ENCODE measurements at regions of chr12 and their contacts with region 1.

Region 1: GRCh38 chr12:32755654-32756475 is at the start of gene YARS2:
- DNase-seq: peak; percentile 87 to 90
- H3K4me3 ChIP-seq: peak within 1 kb of the TSS; percentile 77 to 100 (median 98)
- H3K27ac ChIP-seq: peak within 1 kb of the TSS; percentile 92
- H3K4me1 ChIP-seq: peaks cover 0 to 3% (median 1%) of the 10 kb centered on the region in 4 experiments; a peak in 2 of 7 replicates
- H3K27me3 ChIP-seq: no peaks in the 10 kb centered on the region; a peak in 1 of 7 replicates
- CTCF ChIP-seq: peak; percentile 35 to 89 (median 76)
- EP300 ChIP-seq: no peak
- POLR2A ChIP-seq: peak; percentile 94 to 100
- RAD21 ChIP-seq: peak; percentile 97 to 99
- total RNA-seq, gene YARS2: 41.0 and 41.4 TPM in 2 replicates

Region 2: DNA sequence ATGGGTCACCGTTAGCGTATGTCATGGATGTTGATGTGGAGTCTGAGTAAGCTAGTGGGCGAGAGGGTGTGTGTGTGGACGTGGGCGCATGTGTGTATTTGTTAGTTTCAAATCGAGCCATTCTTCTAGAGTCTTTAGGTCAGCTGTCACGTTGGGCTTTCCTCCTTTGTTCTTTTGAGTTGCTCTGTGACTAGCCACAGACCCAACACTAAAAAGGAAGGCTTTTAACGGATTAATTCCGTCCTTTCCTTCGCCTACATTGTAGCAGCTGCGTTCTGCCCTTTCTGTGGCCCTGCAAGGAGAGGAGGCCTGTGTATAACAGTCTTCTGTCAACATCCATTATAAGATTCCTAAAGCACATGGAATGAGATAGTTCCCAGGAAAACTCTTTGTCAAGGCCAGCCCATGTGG is 193.9 kb before region 1 on chr12:
- CTCF ChIA-PET with region 1: no interaction called
- POLR2A ChIA-PET with region 1: no interaction called
- DNase-seq: no peak
- H3K4me3 ChIP-seq: no peak overlapping the region
- H3K27ac ChIP-seq: no peak overlapping the region; the same call in 1 of the 2 replicates
- H3K4me1 ChIP-seq: peaks cover 3 to 16% (median 15%) of the 10 kb centered on the region in 4 experiments
- H3K27me3 ChIP-seq: no peaks in the 10 kb centered on the region
- CTCF ChIP-seq: no peak
- EP300 ChIP-seq: no peak
- POLR2A ChIP-seq: no peak
- RAD21 ChIP-seq: no peak

Region 3: DNA sequence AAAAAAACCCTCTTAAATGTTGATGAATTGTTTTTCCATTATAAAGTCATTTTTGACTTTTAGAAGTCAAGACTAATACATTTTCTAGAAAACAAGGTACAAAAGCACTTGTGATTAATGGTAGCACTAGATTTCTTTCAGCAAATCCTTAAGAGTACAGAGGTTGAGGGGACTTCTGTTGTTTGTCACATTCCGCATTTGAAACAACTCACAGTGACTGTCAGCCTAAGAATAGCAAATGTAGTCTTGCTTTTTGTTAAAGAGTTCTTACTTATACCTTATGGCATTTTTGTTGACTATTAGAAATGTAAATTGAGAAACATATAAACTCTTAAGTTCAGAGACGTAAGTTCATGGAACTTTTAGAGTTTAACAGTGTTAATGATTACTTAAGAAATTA is 16.6 kb before region 1 on chr12:
- CTCF ChIA-PET with region 1: interaction called, 10 read pairs
- POLR2A ChIA-PET with region 1: interaction called, 22 read pairs
- DNase-seq: no peak
- H3K4me3 ChIP-seq: no peak overlapping the region
- H3K27ac ChIP-seq: no peak overlapping the region
- H3K4me1 ChIP-seq: peaks cover 0 to 3% (median under 1%) of the 10 kb centered on the region in 4 experiments; a peak in 2 of 7 replicates
- H3K27me3 ChIP-seq: no peaks in the 10 kb centered on the region
- CTCF ChIP-seq: no peak
- EP300 ChIP-seq: no peak
- POLR2A ChIP-seq: no peak
- RAD21 ChIP-seq: no peak

Region 4: DNA sequence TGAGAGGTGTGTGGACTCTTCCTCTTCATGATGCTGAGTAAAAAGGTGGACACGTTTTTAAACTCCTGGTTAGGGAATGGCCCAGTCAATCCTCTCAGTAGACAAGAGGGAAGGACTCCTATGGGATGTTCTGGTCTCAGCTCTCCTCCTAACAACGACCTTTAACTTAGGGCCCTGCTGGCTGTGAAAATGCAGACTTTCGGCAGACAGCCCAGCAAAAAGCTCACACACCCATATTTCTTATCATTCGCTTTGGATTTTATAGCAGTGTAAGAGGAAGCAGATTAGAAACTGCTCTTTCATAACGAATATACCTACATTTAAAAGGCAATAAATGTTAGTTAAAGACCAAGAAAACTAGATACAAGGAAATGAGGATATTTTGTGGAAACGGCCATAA is 17.8 kb after region 1 on chr12:
- CTCF ChIA-PET with region 1: interaction called, 30 read pairs
- POLR2A ChIA-PET with region 1: interaction called, 7 read pairs
- DNase-seq: no peak
- H3K4me3 ChIP-seq: no peak overlapping the region
- H3K27ac ChIP-seq: no peak overlapping the region
- H3K4me1 ChIP-seq: no peaks in the 10 kb centered on the region
- H3K27me3 ChIP-seq: no peaks in the 10 kb centered on the region
- CTCF ChIP-seq: no peak
- EP300 ChIP-seq: no peak
- POLR2A ChIP-seq: no peak
- RAD21 ChIP-seq: no peak

Region 5: DNA sequence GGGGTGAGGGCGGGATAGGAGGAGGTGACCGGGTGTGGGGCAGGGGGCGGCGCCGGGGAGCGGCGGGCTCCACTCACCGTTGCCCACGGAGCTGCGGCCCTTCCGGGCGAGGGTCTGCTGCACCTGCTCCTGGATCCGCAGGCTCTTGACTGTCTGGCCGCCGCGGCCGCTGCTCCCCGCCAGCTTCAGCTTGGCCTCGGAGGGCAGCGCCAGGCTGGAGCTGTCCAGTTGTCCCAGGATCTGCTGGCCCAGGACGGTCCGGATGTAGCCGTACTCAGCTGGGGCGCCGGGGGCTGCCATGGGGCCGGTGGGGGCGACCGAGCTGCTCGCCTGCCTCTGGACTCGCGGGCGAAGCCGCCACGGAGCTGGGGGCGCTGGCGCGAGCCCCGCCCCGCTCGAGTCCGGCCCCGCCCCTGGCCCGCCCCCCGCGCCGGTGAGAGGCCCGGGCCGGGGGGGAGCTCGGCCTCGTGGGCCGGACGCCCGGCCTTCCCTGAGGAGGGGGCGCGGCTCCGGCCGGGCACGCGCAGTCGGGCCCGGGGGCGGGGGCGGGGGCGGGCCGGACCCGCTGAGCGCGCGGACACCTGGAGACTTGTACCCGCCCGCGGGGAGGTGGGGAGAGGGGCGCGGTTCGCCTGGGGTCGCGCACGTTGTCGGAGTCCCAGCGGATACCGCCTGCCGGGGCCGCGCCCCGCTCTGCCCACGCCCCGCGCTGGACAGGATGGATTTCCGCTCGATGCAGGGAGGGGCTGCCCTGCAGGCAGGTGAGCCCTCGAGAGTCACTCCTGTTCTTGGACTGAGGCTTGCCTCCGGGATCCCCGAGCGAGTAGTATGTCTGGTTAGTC is 140.8 kb after region 1 on chr12 and contains the start of gene PKP2:
- CTCF ChIA-PET with region 1: interaction called, 8 read pairs
- POLR2A ChIA-PET with region 1: interaction called, 15 read pairs
- DNase-seq: peak; percentile 70 to 83
- H3K4me3 ChIP-seq: peak within 1 kb of the TSS; percentile 73 to 83 (median 78)
- H3K27ac ChIP-seq: peak within 1 kb of the TSS; percentile 41; the same call in 1 of the 2 replicates
- H3K4me1 ChIP-seq: peaks cover 7 to 20% (median 11%) of the 10 kb centered on the region in 4 experiments; a peak in 5 of 7 replicates
- H3K27me3 ChIP-seq: no peaks in the 10 kb centered on the region
- CTCF ChIP-seq: no peak
- EP300 ChIP-seq: no peak
- POLR2A ChIP-seq: peak in 1 of 2 experiments; percentile 66; a peak in 1 of 3 replicates
- RAD21 ChIP-seq: no peak; a peak in 1 of 4 replicates
- total RNA-seq, gene PKP2: 44.2 and 44.8 TPM in 2 replicates

Region 6: GRCh38 chr12:32939801-32940200 is 183.9 kb after region 1 on chr12:
- CTCF ChIA-PET with region 1: interaction called, 10 read pairs
- POLR2A ChIA-PET with region 1: interaction called, 3 read pairs
- DNase-seq: no peak
- H3K4me3 ChIP-seq: no peak overlapping the region
- H3K27ac ChIP-seq: no peak overlapping the region
- H3K4me1 ChIP-seq: no peaks in the 10 kb centered on the region
- H3K27me3 ChIP-seq: no peaks in the 10 kb centered on the region
- CTCF ChIP-seq: no peak
- EP300 ChIP-seq: no peak
- POLR2A ChIP-seq: no peak
- RAD21 ChIP-seq: no peak

Measured in H1 (cell line).